PC-9 (cell line): ENCODE measurements at regions of chr17 and their contacts with region 1.

Region 1: GRCh38 chr17:40443583-40444327 is 505 bp downstream of the IGFBP4 start:
- DNase-seq: peak; percentile 51 to 69
- H3K4me3 ChIP-seq: peak overlapping the region; percentile 73
- H3K27ac ChIP-seq: no peak overlapping the region
- H3K4me1 ChIP-seq: peaks cover 24% of the 10 kb centered on the region
- H3K27me3 ChIP-seq: no peaks in the 10 kb centered on the region
- CTCF ChIP-seq: no peak; the same call in 1 of the 2 replicates

Region 2: DNA sequence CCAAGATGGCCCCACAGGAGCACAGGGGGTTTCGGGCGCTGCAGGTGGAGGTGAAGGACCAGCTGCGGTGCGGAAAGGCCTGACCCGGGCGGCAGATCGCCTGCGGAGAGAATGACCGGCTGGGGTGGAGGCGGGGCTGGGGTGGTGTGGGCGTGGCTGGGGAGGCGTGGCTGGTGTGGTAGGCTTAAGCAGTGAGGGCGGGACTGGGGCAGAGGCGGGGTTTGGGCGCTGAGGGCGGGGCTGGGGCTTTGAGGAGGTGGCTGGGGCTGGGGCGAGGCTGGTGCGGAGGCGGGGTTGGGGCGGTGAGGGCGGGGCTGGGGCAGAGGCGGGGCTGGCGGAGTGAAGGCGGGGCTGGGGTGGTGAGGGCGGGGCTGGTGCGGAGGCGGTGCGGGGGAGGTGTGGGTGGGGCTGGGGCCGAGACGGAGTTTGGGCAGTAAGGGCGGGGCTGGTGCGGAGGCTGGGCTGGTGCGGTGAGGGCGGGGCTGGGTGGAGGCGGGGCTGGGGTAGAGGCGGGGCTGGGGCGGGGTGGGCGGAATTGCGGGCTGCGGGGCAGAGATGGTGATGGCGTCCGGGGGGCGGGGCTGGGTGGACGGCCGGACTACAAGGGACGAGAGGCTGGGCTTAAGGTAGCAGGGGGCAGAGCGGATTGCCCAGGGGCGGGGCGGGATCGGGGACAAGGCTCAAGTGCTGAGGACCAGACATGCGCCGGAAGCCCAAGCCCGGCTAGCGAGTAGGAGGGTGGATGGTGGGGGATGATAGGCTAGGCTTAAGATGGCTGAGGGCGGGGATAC is 490.9 kb before region 1 on chr17:
- CTCF ChIA-PET with region 1: no interaction called
- POLR2A ChIA-PET with region 1: no interaction called
- intact Hi-C with region 1: no loop called
- DNase-seq: peak; percentile 80 to 88
- H3K4me3 ChIP-seq: peak overlapping the region; percentile 41; the same call in 1 of the 2 replicates
- H3K27ac ChIP-seq: no peak overlapping the region
- H3K4me1 ChIP-seq: peaks cover 20% of the 10 kb centered on the region
- H3K27me3 ChIP-seq: no peaks in the 10 kb centered on the region
- CTCF ChIP-seq: no peak

Region 3: DNA sequence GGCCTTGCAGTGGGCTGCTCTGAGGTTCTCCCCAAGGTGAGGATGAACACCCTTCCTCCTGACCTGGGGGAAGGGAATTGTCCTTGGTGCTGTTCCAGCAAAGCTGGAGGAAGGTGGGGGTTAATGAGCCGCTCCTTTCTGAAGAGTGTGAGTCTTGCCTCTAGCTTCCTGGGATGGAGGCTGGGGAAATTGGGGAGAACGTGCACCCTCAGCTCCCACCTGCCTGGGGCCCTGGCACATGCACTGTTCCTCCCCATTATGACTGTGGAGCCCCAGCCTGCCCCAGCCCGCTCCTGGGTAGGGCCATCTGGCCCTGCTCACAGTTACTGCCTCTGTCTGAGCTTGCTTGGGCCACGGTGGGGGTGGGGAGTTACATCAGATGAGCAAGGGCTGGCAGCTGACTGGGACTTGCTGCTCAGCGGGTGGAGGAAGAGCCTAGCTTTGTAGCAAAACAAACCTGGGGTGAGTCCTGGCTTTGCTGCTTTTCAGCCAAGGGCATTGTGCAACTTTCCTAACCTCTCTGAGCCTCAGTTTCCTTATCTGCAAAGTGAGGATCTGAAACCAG is 46.6 kb after region 1 on chr17:
- CTCF ChIA-PET with region 1: interaction called, 3 read pairs
- POLR2A ChIA-PET with region 1: interaction called, 6 read pairs
- intact Hi-C with region 1: loop called (anchors 5 kb)
- DNase-seq: peak; percentile 57 to 62
- H3K4me3 ChIP-seq: peak overlapping the region; percentile 42; the same call in 1 of the 2 replicates
- H3K27ac ChIP-seq: peak overlapping the region; percentile 88
- H3K4me1 ChIP-seq: peaks cover 89% of the 10 kb centered on the region
- H3K27me3 ChIP-seq: no peaks in the 10 kb centered on the region
- CTCF ChIP-seq: no peak

Region 4: GRCh38 chr17:40516581-40517285 is 73.0 kb after region 1 on chr17:
- CTCF ChIA-PET with region 1: no interaction called
- POLR2A ChIA-PET with region 1: interaction called, 3 read pairs
- intact Hi-C with region 1: loop called (anchors 5 kb)
- DNase-seq: peak; percentile 65 to 94
- H3K4me3 ChIP-seq: no peak overlapping the region
- H3K27ac ChIP-seq: peak overlapping the region; percentile 69
- H3K4me1 ChIP-seq: peaks cover 99% of the 10 kb centered on the region
- H3K27me3 ChIP-seq: no peaks in the 10 kb centered on the region
- CTCF ChIP-seq: no peak

Region 5: GRCh38 chr17:40559954-40560591 is 116.3 kb after region 1 on chr17:
- CTCF ChIA-PET with region 1: interaction called, 17 read pairs
- POLR2A ChIA-PET with region 1: interaction called, 3 read pairs
- intact Hi-C with region 1: loop called (anchors 1 kb)
- DNase-seq: peak; percentile 79 to 91
- H3K4me3 ChIP-seq: no peak overlapping the region
- H3K27ac ChIP-seq: no peak overlapping the region
- H3K4me1 ChIP-seq: peaks cover 4% of the 10 kb centered on the region; the same call in 1 of the 2 replicates
- H3K27me3 ChIP-seq: peaks cover 19% of the 10 kb centered on the region
- CTCF ChIP-seq: peak; percentile 95

Region 6: GRCh38 chr17:40622509-40622928 is 178.8 kb after region 1 on chr17:
- CTCF ChIA-PET with region 1: interaction called, 13 read pairs
- POLR2A ChIA-PET with region 1: no interaction called
- intact Hi-C with region 1: no loop called
- DNase-seq: no peak
- H3K4me3 ChIP-seq: no peak overlapping the region
- H3K27ac ChIP-seq: no peak overlapping the region
- H3K4me1 ChIP-seq: peaks cover 5% of the 10 kb centered on the region
- H3K27me3 ChIP-seq: no peaks in the 10 kb centered on the region
- CTCF ChIP-seq: no peak